ENCODE measurements at regions of chr5 and their contacts with region 1.

Region 1: GRCh38 chr5:103475629-103476240 is 86.9 kb downstream of the NUDT12 start:
- DNase-seq: no peak
- ATAC-seq: peak; percentile 73
- H3K4me3 ChIP-seq: no peak overlapping the region
- H3K27ac ChIP-seq: no peak overlapping the region
- H3K4me1 ChIP-seq: no peaks in the 10 kb centered on the region
- H3K27me3 ChIP-seq: no peaks in the 10 kb centered on the region; a peak in 1 of 4 replicates
- CTCF ChIP-seq: peak; percentile 45 to 74 (median 53)
- EP300 ChIP-seq: no peak
- POLR2A ChIP-seq: no peak
- RAD21 ChIP-seq: peak; percentile 85

Region 2: DNA sequence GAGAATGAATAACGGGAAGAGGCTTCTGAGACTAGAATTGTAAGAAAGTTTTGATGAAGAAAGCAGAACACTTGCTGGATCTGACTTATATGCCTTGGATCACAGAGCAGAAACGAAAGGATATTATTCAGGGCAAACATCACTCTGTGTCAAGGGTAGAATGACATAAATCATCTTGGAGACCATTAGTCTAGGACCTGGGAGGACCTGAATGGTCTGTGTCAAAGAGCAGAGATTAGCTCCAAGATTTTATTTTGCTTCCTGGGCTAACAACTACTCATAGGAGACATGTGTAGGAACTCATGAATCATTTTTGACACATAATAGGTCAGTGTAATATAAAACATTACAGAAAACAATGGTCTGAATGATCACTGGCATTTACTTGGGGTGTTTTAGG is 1597.5 kb before region 1 on chr5:
- CTCF ChIA-PET with region 1: no interaction called
- POLR2A ChIA-PET with region 1: no interaction called
- RAD21 ChIA-PET with region 1: no interaction called
- SMC1A ChIA-PET with region 1: no interaction called
- in situ Hi-C with region 1: no loop called
- intact Hi-C with region 1: loop called (anchors 10 kb)
- DNase-seq: no peak
- ATAC-seq: no peak
- H3K4me3 ChIP-seq: no peak overlapping the region
- H3K27ac ChIP-seq: no peak overlapping the region
- H3K4me1 ChIP-seq: no peaks in the 10 kb centered on the region
- H3K27me3 ChIP-seq: no peaks in the 10 kb centered on the region
- CTCF ChIP-seq: no peak
- EP300 ChIP-seq: no peak
- POLR2A ChIP-seq: no peak
- RAD21 ChIP-seq: no peak

Region 3: GRCh38 chr5:102211165-102211564 is 1264.6 kb before region 1 on chr5:
- CTCF ChIA-PET with region 1: no interaction called
- POLR2A ChIA-PET with region 1: no interaction called
- RAD21 ChIA-PET with region 1: no interaction called
- SMC1A ChIA-PET with region 1: no interaction called
- in situ Hi-C with region 1: no loop called
- intact Hi-C with region 1: no loop called
- DNase-seq: no peak
- ATAC-seq: peak; percentile 37; the same call in 2 of the 3 replicates
- H3K4me3 ChIP-seq: no peak overlapping the region
- H3K27ac ChIP-seq: no peak overlapping the region
- H3K4me1 ChIP-seq: no peaks in the 10 kb centered on the region
- H3K27me3 ChIP-seq: no peaks in the 10 kb centered on the region
- CTCF ChIP-seq: no peak
- EP300 ChIP-seq: no peak
- POLR2A ChIP-seq: no peak
- RAD21 ChIP-seq: no peak

Region 4: GRCh38 chr5:103139264-103139865 is 336.4 kb before region 1 on chr5:
- CTCF ChIA-PET with region 1: interaction called, 3 read pairs
- POLR2A ChIA-PET with region 1: no interaction called
- RAD21 ChIA-PET with region 1: no interaction called
- SMC1A ChIA-PET with region 1: no interaction called
- in situ Hi-C with region 1: no loop called
- intact Hi-C with region 1: loop called (anchors 10 kb)
- DNase-seq: peak; percentile 30
- ATAC-seq: peak; percentile 100
- H3K4me3 ChIP-seq: no peak overlapping the region
- H3K27ac ChIP-seq: no peak overlapping the region
- H3K4me1 ChIP-seq: no peaks in the 10 kb centered on the region
- H3K27me3 ChIP-seq: no peaks in the 10 kb centered on the region
- CTCF ChIP-seq: peak; percentile 83 to 96 (median 94); a peak in 5 of 6 replicates
- EP300 ChIP-seq: no peak
- POLR2A ChIP-seq: no peak
- RAD21 ChIP-seq: peak; percentile 98

Region 5: DNA sequence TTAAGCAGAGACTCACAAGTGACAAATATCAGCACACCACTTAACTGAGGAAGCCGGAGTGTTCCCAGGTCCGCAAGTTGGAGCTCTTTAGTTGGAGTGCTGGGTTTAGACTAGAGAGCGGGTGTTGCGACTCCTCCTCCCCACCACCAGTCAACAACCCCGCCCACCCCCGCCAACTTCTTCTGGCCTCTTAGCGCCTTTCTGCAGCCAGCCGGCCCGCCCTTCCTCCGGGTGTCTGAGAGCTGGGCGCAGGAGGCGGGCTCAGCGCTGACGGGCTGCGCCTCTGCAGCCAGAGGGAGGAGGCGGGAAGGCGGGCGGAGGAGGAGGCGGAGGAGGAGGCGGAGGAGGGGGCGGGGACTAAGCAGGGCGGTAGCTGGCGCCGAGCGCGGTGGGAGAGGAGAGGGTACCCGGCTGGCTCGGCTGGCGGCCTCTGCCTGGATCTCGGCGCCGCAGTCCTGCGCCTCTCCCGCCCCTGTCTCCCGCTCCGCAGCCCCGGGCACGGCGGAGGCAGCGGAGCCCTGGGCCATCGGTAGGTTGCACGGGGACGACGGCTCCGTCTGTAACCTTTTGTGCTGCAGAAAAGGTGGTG is 217.3 kb before region 1 on chr5 and contains the start of gene MACIR:
- CTCF ChIA-PET with region 1: interaction called, 77 read pairs
- POLR2A ChIA-PET with region 1: interaction called, 3 read pairs
- RAD21 ChIA-PET with region 1: interaction called, 21 read pairs
- SMC1A ChIA-PET with region 1: interaction called, 30 read pairs
- in situ Hi-C with region 1: no loop called
- intact Hi-C with region 1: loop called (anchors 1 kb)
- DNase-seq: peak; percentile 88
- ATAC-seq: peak; percentile 92
- H3K4me3 ChIP-seq: peak within 1 kb of the TSS; percentile 87
- H3K27ac ChIP-seq: peak within 1 kb of the TSS; percentile 34
- H3K4me1 ChIP-seq: peaks cover 3% of the 10 kb centered on the region; the same call in 1 of the 2 replicates
- H3K27me3 ChIP-seq: no peaks in the 10 kb centered on the region
- CTCF ChIP-seq: no peak; a peak in 1 of 6 replicates
- EP300 ChIP-seq: no peak
- POLR2A ChIP-seq: peak; percentile 82
- RAD21 ChIP-seq: 0 out of 2 replicates have a peak, but pooled peaks have one; percentile 2
- polyA plus RNA-seq, gene MACIR: 2.1 to 3.8 TPM

Region 6: DNA sequence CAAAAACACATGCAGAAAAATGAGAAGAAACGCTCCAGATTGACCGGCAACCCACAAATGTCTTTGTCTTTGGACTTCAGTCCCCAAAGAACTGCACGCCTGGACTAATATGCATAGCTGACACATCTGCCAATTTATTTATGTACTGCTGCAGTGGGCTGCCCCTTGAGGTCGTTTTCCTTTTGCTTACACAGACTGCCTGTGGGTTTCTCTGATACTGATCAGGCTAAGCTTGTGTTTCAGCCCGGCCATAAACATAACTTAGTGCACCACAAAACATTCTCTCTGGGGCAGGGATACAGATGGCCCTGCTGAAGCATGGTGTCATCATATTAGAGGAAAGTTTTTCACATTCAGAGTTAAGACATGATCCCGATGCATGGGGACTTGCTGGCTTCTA is 11.5 kb after region 1 on chr5:
- CTCF ChIA-PET with region 1: interaction called, 16 read pairs
- POLR2A ChIA-PET with region 1: no interaction called
- RAD21 ChIA-PET with region 1: no interaction called
- SMC1A ChIA-PET with region 1: interaction called, 3 read pairs
- in situ Hi-C with region 1: no loop called
- intact Hi-C with region 1: no loop called
- DNase-seq: no peak
- ATAC-seq: peak; percentile 18; the same call in 2 of the 3 replicates
- H3K4me3 ChIP-seq: no peak overlapping the region
- H3K27ac ChIP-seq: no peak overlapping the region
- H3K4me1 ChIP-seq: peaks cover 3% of the 10 kb centered on the region; the same call in 1 of the 2 replicates
- H3K27me3 ChIP-seq: peaks cover 0 to 3% of the 10 kb centered on the region in 2 experiments; a peak in 1 of 4 replicates
- CTCF ChIP-seq: no peak
- EP300 ChIP-seq: no peak
- POLR2A ChIP-seq: no peak
- RAD21 ChIP-seq: no peak

Region 7: DNA sequence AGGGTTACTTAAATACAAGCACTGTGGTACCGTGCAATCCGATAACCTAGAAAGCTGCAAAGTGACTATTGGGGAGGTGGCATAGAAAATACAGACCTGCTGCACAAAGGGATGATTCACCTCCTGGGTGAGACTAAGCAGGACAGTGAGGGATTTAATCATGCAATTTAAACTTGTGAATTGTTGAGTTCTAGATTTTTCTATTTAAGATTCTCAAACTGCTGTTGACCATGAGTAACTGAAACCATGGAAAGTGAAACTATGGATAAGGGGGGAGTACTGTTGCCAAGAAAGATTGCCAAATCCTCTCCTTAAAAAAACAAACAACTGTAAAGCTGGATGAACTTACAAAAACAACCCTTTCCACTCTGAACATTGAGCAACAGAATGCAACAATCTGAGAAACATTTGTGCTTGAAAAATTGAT is 148.3 kb after region 1 on chr5:
- CTCF ChIA-PET with region 1: no interaction called
- POLR2A ChIA-PET with region 1: no interaction called
- RAD21 ChIA-PET with region 1: no interaction called
- SMC1A ChIA-PET with region 1: no interaction called
- in situ Hi-C with region 1: no loop called
- intact Hi-C with region 1: no loop called
- DNase-seq: no peak
- ATAC-seq: no peak
- H3K4me3 ChIP-seq: no peak overlapping the region
- H3K27ac ChIP-seq: no peak overlapping the region
- H3K4me1 ChIP-seq: no peaks in the 10 kb centered on the region
- H3K27me3 ChIP-seq: no peaks in the 10 kb centered on the region
- CTCF ChIP-seq: no peak
- EP300 ChIP-seq: no peak
- POLR2A ChIP-seq: no peak
- RAD21 ChIP-seq: no peak

Measured in GM12878 (cell line).